ENCODE measurements at regions of chr9 and their contacts with region 1.

Region 1: DNA sequence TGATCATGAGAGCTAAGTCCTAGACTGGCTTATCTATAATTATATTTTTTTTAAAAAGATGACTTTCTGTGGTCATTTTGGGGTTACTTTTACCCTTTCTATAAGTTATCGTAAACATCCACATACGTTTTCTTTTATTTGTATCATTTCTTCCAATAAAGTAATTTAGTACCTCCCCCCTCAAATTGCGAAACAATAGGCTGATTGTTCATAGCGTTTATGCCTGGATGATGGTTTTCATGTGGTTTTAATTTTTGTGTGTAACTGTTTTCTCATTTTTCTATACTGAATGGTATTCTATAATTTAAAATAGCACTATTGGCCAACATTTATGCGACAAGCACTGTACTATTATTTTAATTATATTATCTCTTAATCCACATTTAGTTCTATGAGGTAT is 44.5 kb downstream of the SMC5 start:
- DNase-seq: no peak
- ATAC-seq: no peak
- H3K4me3 Mint-ChIP-seq: no peak overlapping the region
- H3K27ac Mint-ChIP-seq: no peak overlapping the region
- H3K4me1 Mint-ChIP-seq: peaks cover 2% of the 10 kb centered on the region
- H3K27me3 Mint-ChIP-seq: no peaks in the 10 kb centered on the region

Region 2: GRCh38 chr9:68609901-68610415 is 1693.3 kb before region 1 on chr9:
- CTCF ChIA-PET with region 1: no interaction called
- POLR2A ChIA-PET with region 1: no interaction called
- intact Hi-C with region 1: no loop called
- DNase-seq: no peak
- ATAC-seq: no peak
- H3K4me3 Mint-ChIP-seq: no peak overlapping the region
- H3K27ac Mint-ChIP-seq: no peak overlapping the region
- H3K4me1 Mint-ChIP-seq: no peaks in the 10 kb centered on the region
- H3K27me3 Mint-ChIP-seq: peaks cover 6% of the 10 kb centered on the region

Region 3: DNA sequence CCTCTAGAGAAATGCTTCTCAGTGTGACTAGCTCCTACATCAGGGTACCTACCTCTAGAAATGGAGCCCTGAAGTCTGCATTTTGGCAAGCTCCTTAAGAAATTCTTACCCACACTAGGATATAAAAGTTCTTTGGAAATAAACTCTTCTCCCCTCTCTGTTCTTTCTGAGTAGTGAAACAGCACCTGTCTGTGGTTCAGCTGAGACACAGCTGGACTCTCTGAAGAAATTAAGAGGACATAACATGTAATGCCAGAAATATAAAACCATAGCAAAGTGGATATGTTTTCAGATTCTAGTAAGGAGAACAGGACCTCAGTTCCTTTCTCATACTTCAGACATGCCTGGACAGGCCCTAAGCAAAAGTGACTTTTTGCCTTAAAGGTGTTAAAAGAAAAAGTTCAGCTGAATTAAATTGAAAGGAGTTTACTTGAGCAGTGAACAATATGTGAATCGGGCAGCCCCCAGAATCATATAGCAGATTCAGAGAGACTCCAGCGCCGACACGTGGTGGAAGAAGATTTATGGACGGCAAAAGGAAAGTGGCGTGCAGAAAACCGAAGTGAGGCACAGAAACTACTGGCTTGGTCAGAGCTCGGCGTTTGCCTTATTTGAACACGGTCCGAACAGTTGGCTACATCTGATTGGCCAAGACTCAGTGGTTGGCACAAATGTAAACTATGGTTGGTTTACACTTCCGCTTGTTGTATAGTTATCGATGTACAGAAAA is 1353.8 kb before region 1 on chr9:
- CTCF ChIA-PET with region 1: no interaction called
- POLR2A ChIA-PET with region 1: no interaction called
- intact Hi-C with region 1: no loop called
- DNase-seq: peak; percentile 55
- ATAC-seq: no peak
- H3K4me3 Mint-ChIP-seq: no peak overlapping the region
- H3K27ac Mint-ChIP-seq: peak overlapping the region; percentile 48
- H3K4me1 Mint-ChIP-seq: peaks cover 42% of the 10 kb centered on the region
- H3K27me3 Mint-ChIP-seq: peaks cover 13% of the 10 kb centered on the region

Region 4: GRCh38 chr9:70283848-70284247 is 19.4 kb before region 1 on chr9:
- CTCF ChIA-PET with region 1: interaction called, 3 read pairs
- POLR2A ChIA-PET with region 1: no interaction called
- intact Hi-C with region 1: loop called in 1 of 2 experiments (anchors 2 kb)
- DNase-seq: no peak
- ATAC-seq: peak; percentile 23
- H3K4me3 Mint-ChIP-seq: no peak overlapping the region
- H3K27ac Mint-ChIP-seq: peak overlapping the region; percentile 63
- H3K4me1 Mint-ChIP-seq: peaks cover 9% of the 10 kb centered on the region
- H3K27me3 Mint-ChIP-seq: no peaks in the 10 kb centered on the region